GM12878 (cell line): ENCODE measurements at regions of chr12 and their contacts with region 1.

Region 1: DNA sequence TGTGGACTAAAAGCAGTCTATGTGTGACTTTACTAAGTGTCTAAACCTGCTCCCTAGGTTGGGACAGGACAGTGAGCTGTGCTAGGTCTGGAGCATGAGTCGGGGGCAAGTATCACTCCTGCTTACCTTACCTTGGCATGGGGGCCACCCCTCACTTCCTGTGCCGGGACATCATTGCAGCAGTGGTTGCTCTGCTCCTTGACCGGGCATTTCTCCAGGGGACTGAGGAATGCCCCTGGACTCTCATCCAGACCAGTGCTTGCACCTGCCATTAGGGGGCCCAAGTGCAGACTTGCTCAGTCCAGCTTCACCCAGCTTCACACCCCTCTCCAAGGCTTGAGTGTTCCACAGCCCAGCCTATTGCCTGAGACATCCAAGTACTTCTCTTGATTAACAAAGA is 84.7 kb upstream of the NELL2 start:
- DNase-seq: no peak
- ATAC-seq: peak; percentile 43; the same call in 1 of the 3 replicates
- H3K4me3 ChIP-seq: no peak overlapping the region
- H3K27ac ChIP-seq: no peak overlapping the region
- H3K4me1 ChIP-seq: no peaks in the 10 kb centered on the region
- H3K27me3 ChIP-seq: no peaks in the 10 kb centered on the region
- CTCF ChIP-seq: no peak
- EP300 ChIP-seq: no peak
- POLR2A ChIP-seq: no peak
- RAD21 ChIP-seq: no peak

Region 2: GRCh38 chr12:44947163-44947562 is 13.7 kb before region 1 on chr12:
- CTCF ChIA-PET with region 1: interaction called, 22 read pairs
- POLR2A ChIA-PET with region 1: no interaction called
- RAD21 ChIA-PET with region 1: no interaction called
- SMC1A ChIA-PET with region 1: no interaction called
- in situ Hi-C with region 1: no loop called
- intact Hi-C with region 1: no loop called
- DNase-seq: no peak
- ATAC-seq: no peak
- H3K4me3 ChIP-seq: no peak overlapping the region
- H3K27ac ChIP-seq: no peak overlapping the region
- H3K4me1 ChIP-seq: no peaks in the 10 kb centered on the region
- H3K27me3 ChIP-seq: no peaks in the 10 kb centered on the region
- CTCF ChIP-seq: no peak
- EP300 ChIP-seq: no peak
- POLR2A ChIP-seq: no peak
- RAD21 ChIP-seq: no peak